ENCODE measurements at regions of chr13 and their contacts with region 1.

Region 1: DNA sequence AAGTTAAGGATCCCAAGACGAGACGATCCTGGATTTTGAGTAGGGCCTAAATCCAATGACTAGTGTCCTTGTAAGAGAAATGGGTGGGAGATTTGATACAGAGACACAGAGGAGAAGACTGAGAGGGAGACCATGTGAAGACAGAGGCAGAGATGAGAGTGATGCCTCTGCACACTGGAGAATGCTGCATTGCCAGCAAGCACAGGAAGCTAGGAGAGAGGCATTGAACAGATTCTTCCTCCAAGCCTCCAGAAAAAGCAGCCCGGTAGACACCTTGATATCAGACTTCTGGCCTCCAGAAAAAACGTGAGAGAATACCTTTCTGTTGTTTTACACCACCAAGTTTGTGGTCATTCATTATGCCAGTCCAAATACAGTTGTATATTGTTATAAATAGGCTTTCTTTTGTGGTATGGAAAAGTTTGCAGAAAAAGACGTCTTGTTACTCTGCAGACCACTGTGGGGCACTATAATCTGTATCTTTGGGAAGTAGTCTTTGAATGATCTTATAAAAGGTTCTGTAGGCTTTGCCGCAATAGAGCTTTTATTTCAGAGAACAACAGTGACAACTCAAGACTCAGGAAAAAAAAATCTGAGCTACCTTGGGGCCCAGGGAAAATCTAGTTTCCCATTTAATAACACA is 17.9 kb upstream of the RFC3 start:
- DNase-seq: peak in 2 of 14 experiments; percentile 21 to 32
- ATAC-seq: peak; percentile 29
- H3K4me3 ChIP-seq: no peak overlapping the region
- H3K4me3 Mint-ChIP-seq: no peak overlapping the region
- H3K27ac ChIP-seq: no peak overlapping the region
- H3K27ac Mint-ChIP-seq: no peak overlapping the region
- H3K4me1 ChIP-seq: no peaks in the 10 kb centered on the region
- H3K4me1 Mint-ChIP-seq: peaks cover 8% of the 10 kb centered on the region
- H3K27me3 ChIP-seq: no peaks in the 10 kb centered on the region
- H3K27me3 Mint-ChIP-seq: peaks cover 18% of the 10 kb centered on the region
- CTCF ChIP-seq: peak; percentile 54

Region 2: GRCh38 chr13:32969516-32969941 is 830.5 kb before region 1 on chr13:
- CTCF ChIA-PET with region 1: no interaction called
- POLR2A ChIA-PET with region 1: no interaction called
- intact Hi-C with region 1: no loop called
- DNase-seq: peak in 2 of 14 experiments; percentile 6 to 14
- ATAC-seq: no peak
- H3K4me3 ChIP-seq: no peak overlapping the region
- H3K4me3 Mint-ChIP-seq: no peak overlapping the region
- H3K27ac ChIP-seq: no peak overlapping the region
- H3K27ac Mint-ChIP-seq: no peak overlapping the region
- H3K4me1 ChIP-seq: no peaks in the 10 kb centered on the region
- H3K4me1 Mint-ChIP-seq: no peaks in the 10 kb centered on the region
- H3K27me3 ChIP-seq: peaks cover 0 to 3% of the 10 kb centered on the region in 2 experiments
- H3K27me3 Mint-ChIP-seq: no peaks in the 10 kb centered on the region
- CTCF ChIP-seq: no peak

Region 3: GRCh38 chr13:33992853-33993336 is 192.8 kb after region 1 on chr13:
- CTCF ChIA-PET with region 1: no interaction called
- POLR2A ChIA-PET with region 1: no interaction called
- intact Hi-C with region 1: no loop called
- DNase-seq: no peak
- ATAC-seq: no peak
- H3K4me3 ChIP-seq: no peak overlapping the region
- H3K4me3 Mint-ChIP-seq: no peak overlapping the region
- H3K27ac ChIP-seq: no peak overlapping the region
- H3K27ac Mint-ChIP-seq: no peak overlapping the region
- H3K4me1 ChIP-seq: no peaks in the 10 kb centered on the region
- H3K4me1 Mint-ChIP-seq: no peaks in the 10 kb centered on the region
- H3K27me3 ChIP-seq: no peaks in the 10 kb centered on the region
- H3K27me3 Mint-ChIP-seq: no peaks in the 10 kb centered on the region
- CTCF ChIP-seq: no peak

Region 4: GRCh38 chr13:35157143-35157755 is 1357.2 kb after region 1 on chr13:
- CTCF ChIA-PET with region 1: no interaction called
- POLR2A ChIA-PET with region 1: no interaction called
- intact Hi-C with region 1: loop called (anchors 5 to 10 kb)
- DNase-seq: peak in 4 of 14 experiments; percentile 17 to 51 (median 32)
- ATAC-seq: no peak
- H3K4me3 ChIP-seq: no peak overlapping the region
- H3K4me3 Mint-ChIP-seq: no peak overlapping the region
- H3K27ac ChIP-seq: no peak overlapping the region
- H3K27ac Mint-ChIP-seq: no peak overlapping the region
- H3K4me1 ChIP-seq: no peaks in the 10 kb centered on the region
- H3K4me1 Mint-ChIP-seq: peaks cover under 1% of the 10 kb centered on the region
- H3K27me3 ChIP-seq: no peaks in the 10 kb centered on the region
- H3K27me3 Mint-ChIP-seq: no peaks in the 10 kb centered on the region
- CTCF ChIP-seq: peak; percentile 64

Measured in CD4-positive, alpha-beta T cell (primary cell).